Endothelial cell of umbilical vein (primary cell): ENCODE measurements at regions of chr12 and their contacts with region 1.

Region 1: DNA sequence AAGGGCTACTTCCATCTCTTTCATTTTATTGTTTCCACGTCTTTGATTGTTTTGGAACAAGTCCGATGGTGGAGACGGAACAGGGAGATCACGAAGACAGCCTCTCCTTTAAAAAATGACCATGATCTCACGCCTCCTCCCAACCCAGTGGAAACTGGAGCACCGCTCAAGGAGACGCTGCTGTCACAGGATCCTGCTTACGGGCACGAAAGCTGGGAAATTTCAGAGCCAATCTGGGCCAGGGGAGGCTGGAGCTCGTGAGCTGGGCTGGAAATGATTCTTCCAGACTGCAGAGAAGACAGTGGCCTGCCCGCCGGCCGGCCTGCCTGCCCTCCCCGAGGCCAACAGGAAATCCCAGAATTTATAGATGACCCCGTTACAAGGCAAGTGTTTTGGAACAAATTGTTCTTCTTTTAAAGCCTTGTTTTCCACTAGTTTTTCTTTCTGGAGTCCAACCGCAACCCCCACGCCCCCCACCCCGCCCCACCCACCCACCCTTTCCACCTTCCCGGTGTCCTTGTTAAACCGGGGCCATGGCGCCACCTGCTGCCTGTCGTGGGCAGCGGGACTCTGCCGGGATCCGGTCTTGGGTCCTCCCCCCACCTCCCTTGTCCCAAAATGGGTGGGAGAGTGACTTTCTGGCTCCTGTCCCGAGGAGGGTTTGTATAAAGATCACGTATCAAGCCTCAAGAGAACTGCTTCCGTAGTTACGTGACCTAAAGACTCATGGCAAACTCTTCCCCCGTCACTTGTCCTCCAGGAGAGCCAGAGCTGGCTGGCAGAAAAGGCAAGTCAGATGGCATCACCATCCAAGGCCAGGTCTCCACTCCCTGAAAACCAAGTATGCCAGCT is 40.3 kb downstream of the MAP1LC3B2 start:
- DNase-seq: peak; percentile 73
- H3K4me3 ChIP-seq: peak overlapping the region in 2 of 3 experiments; percentile 0 to 38
- H3K27ac ChIP-seq: peak overlapping the region; percentile 30
- H3K4me1 ChIP-seq: peaks cover 10% of the 10 kb centered on the region
- H3K27me3 ChIP-seq: no peaks in the 10 kb centered on the region
- CTCF ChIP-seq: peak; percentile 42 to 73
- POLR2A ChIP-seq: no peak

Region 2: GRCh38 chr12:115998119-115998633 is 601.3 kb before region 1 on chr12:
- CTCF ChIA-PET with region 1: interaction called, 11 read pairs
- POLR2A ChIA-PET with region 1: no interaction called
- dilution Hi-C with region 1: no loop called
- intact Hi-C with region 1: loop called (anchors 1 kb)
- DNase-seq: peak; percentile 70
- H3K4me3 ChIP-seq: no peak overlapping the region
- H3K27ac ChIP-seq: peak overlapping the region; percentile 34
- H3K4me1 ChIP-seq: no peaks in the 10 kb centered on the region
- H3K27me3 ChIP-seq: no peaks in the 10 kb centered on the region
- CTCF ChIP-seq: peak; percentile 47 to 52
- POLR2A ChIP-seq: no peak

Region 3: DNA sequence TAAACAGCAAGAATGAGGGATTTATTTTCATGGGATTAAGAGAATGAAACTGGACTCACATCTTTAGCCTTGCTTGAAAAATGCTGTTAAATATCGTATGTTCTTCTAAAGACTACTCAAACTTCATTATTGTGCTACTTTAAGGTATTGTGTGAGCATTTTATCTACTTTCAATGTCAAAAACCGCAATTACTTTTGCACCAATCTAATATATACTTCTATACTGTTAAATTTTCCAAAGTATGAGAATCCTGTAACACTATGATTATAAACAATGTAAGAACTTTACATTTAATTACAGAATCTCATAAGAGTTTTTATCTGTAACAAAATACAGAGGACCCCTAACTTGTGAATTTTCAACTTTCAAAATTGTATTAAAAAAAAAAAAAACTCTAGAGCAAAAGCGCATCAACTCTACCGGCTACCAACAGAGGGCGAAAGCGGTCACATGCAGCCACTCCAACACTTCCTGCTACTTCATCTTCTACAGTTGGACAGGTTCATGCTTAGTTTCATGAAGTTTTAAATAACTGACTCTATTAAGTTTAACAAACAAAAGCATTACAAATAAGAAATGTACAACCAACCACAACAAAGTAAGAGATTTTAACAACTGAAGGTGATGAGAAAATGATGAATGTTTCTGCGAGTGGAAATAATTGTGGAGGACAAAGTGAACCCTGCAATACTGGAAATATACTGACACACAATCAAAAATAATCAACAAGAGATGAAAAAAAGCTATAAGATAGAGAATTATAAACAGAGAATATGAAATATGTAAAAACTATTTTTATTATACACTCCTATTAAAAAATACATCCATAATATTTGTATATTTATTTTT is 532.9 kb before region 1 on chr12:
- CTCF ChIA-PET with region 1: interaction called, 3 read pairs
- POLR2A ChIA-PET with region 1: no interaction called
- dilution Hi-C with region 1: no loop called
- intact Hi-C with region 1: loop called (anchors 1 kb)
- DNase-seq: peak; percentile 46
- H3K4me3 ChIP-seq: no peak overlapping the region
- H3K27ac ChIP-seq: no peak overlapping the region
- H3K4me1 ChIP-seq: peaks cover 3% of the 10 kb centered on the region
- H3K27me3 ChIP-seq: no peaks in the 10 kb centered on the region
- CTCF ChIP-seq: peak; percentile 61 to 80
- POLR2A ChIP-seq: no peak

Region 4: DNA sequence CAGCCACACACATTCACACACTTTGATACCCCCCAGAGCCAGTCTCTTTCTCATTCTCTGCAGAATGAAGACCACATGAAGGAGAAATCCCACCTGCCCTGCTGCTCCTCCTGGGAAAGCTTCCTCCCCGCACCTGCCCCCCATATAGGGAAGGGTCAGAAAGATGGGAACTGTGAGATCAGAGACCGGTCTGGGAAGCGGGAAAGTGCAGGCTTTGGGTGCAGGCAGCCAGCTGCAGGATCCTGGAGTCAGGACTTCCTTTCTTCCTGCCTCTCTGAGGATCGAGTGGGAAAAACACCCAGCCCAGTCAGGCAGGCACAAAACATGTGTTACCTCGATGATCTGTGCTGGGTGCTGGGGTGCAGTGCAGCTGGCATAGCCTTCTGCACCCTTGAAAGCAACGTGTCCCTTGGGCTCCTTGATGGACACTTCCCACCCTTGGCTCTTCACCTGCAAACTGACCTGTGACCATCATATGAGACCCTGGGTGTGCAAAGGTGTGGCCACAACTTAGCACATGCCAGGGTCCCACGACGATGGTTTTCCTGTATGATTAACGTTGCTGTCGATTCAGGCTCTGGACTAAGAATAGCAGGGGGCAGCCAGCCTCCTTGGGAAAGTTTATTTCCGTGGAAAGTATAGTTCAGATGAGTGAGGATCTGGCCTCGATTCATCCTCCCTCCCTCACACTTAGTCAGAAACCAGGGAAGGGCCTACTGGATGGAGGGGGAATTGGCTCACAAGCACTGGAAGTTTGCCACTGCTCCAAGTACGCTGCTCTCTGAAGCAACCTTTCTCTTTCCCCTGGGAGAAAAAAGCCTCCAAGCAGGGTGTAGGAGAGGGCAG is 216.6 kb before region 1 on chr12:
- CTCF ChIA-PET with region 1: interaction called, 3 read pairs
- POLR2A ChIA-PET with region 1: no interaction called
- dilution Hi-C with region 1: no loop called
- intact Hi-C with region 1: loop called (anchors 1 kb)
- DNase-seq: peak; percentile 94
- H3K4me3 ChIP-seq: no peak overlapping the region
- H3K27ac ChIP-seq: peak overlapping the region; percentile 83
- H3K4me1 ChIP-seq: peaks cover 31% of the 10 kb centered on the region
- H3K27me3 ChIP-seq: no peaks in the 10 kb centered on the region
- CTCF ChIP-seq: peak in 1 of 2 donors; percentile 21
- POLR2A ChIP-seq: no peak

Region 5: GRCh38 chr12:116525418-116526001 is 74.0 kb before region 1 on chr12:
- CTCF ChIA-PET with region 1: interaction called, 4 read pairs
- POLR2A ChIA-PET with region 1: interaction called, 3 read pairs
- dilution Hi-C with region 1: no loop called
- intact Hi-C with region 1: loop called (anchors 2 kb)
- DNase-seq: peak; percentile 74
- H3K4me3 ChIP-seq: no peak overlapping the region
- H3K27ac ChIP-seq: peak overlapping the region; percentile 68
- H3K4me1 ChIP-seq: peaks cover 22% of the 10 kb centered on the region
- H3K27me3 ChIP-seq: no peaks in the 10 kb centered on the region
- CTCF ChIP-seq: no peak
- POLR2A ChIP-seq: no peak